Panc1 (cell line): ENCODE measurements at regions of chr10 and their contacts with region 1.

Region 1: GRCh38 chr10:105585707-105586106 is 944.6 kb downstream of the SORCS3 start:
- DNase-seq: no peak
- ATAC-seq: peak; percentile 80
- H3K4me3 ChIP-seq: no peak overlapping the region
- H3K27ac ChIP-seq: no peak overlapping the region
- H3K4me1 ChIP-seq: peaks cover 4% of the 10 kb centered on the region; the same call in 1 of the 2 replicates
- H3K27me3 ChIP-seq: no peaks in the 10 kb centered on the region
- CTCF ChIP-seq: no peak

Region 2: GRCh38 chr10:105540400-105540799 is 45.3 kb before region 1 on chr10:
- CTCF ChIA-PET with region 1: no interaction called
- POLR2A ChIA-PET with region 1: no interaction called
- in situ Hi-C with region 1: no loop called
- intact Hi-C with region 1: loop called (anchors 5 kb)
- DNase-seq: no peak
- ATAC-seq: no peak
- H3K4me3 ChIP-seq: no peak overlapping the region
- H3K27ac ChIP-seq: no peak overlapping the region
- H3K4me1 ChIP-seq: no peaks in the 10 kb centered on the region
- H3K27me3 ChIP-seq: no peaks in the 10 kb centered on the region
- CTCF ChIP-seq: no peak

Region 3: GRCh38 chr10:105650306-105650705 is 64.6 kb after region 1 on chr10:
- CTCF ChIA-PET with region 1: no interaction called
- POLR2A ChIA-PET with region 1: no interaction called
- in situ Hi-C with region 1: no loop called
- intact Hi-C with region 1: no loop called
- DNase-seq: no peak
- ATAC-seq: no peak
- H3K4me3 ChIP-seq: no peak overlapping the region
- H3K27ac ChIP-seq: no peak overlapping the region
- H3K4me1 ChIP-seq: no peaks in the 10 kb centered on the region
- H3K27me3 ChIP-seq: no peaks in the 10 kb centered on the region
- CTCF ChIP-seq: no peak

Region 4: DNA sequence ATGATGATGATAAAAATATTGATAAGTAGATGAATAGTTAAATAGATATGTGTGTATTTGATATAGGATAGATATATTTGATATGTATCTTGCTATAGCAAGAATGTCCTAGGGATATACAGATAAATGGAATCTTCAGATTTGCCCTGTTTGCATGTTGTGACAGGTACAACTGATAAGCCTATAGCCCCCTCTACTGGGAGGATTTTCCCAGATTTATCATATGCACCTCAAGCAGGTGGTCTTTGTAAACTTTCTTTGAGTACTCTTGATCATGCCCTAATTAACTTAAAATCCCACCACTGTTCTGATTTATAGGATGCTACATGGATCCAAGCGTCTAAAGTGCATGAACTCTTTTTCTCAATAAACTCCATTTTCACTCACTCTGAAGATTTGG is 106.1 kb after region 1 on chr10:
- CTCF ChIA-PET with region 1: no interaction called
- POLR2A ChIA-PET with region 1: no interaction called
- in situ Hi-C with region 1: no loop called
- intact Hi-C with region 1: no loop called
- DNase-seq: no peak
- ATAC-seq: no peak
- H3K4me3 ChIP-seq: no peak overlapping the region
- H3K27ac ChIP-seq: no peak overlapping the region
- H3K4me1 ChIP-seq: no peaks in the 10 kb centered on the region
- H3K27me3 ChIP-seq: no peaks in the 10 kb centered on the region
- CTCF ChIP-seq: peak; percentile 18; the same call in 1 of the 2 replicates

Region 5: DNA sequence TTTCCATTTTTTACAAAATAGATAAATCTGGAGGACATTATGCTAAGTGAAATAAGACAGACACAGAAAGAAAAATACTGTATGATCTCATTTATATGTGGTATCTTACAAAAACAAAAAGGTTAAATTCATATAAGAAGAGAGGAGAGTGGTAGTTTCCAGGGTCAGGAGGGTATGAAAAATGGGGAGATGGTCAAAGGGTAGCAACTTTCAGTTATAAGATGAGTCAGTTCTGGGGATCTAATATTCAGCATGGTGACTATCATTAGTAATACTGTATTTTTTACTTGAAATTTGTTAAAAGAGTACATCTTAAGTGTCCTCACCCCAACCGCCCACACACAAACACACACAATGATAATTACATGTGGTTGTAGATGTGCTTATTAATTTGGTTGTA is 328.7 kb after region 1 on chr10:
- CTCF ChIA-PET with region 1: no interaction called
- POLR2A ChIA-PET with region 1: no interaction called
- in situ Hi-C with region 1: no loop called
- intact Hi-C with region 1: no loop called
- DNase-seq: no peak
- ATAC-seq: no peak
- H3K4me3 ChIP-seq: no peak overlapping the region
- H3K27ac ChIP-seq: no peak overlapping the region
- H3K4me1 ChIP-seq: no peaks in the 10 kb centered on the region
- H3K27me3 ChIP-seq: no peaks in the 10 kb centered on the region
- CTCF ChIP-seq: no peak